Thyroid gland (tissue), 4 donors: ENCODE measurements at regions of chr7 and their contacts with region 1.

Region 1: DNA sequence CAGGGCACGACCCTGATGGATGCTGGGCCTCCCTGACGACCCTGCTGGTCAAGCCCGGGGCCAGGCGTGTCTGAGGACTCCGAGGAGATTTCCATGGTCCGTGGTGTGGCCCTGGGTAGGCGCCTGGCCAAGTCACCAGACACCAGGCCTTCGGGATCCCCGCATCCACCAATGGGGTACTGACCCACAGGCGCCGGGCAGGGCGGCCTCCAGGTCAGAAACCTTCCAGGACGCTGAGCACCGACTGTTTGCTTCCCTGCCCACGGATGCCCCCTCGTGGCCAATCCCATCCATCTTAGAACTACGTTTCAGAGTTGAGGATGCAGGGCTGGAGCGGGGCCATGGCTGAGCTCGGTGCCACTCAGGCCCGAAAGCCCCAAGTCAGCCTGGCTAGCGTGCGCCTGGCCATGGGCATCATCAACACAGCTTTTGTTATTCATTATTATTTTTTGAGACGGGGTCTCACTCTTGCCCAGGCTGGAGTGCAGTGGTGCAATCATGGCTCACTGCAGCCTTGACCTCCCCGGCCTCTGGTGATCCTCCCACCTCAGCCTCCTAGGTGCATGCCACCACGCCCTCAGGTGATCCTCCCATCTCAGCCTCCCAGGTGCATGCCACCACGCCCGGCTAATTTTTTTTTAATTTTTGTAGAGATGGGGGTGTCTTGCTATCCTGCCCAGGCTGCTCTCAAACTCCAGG is 7.1 kb upstream of the AMZ1 start:
- DNase-seq: peak; percentile 85 to 91
- H3K4me3 ChIP-seq: no peak overlapping the region
- H3K27ac ChIP-seq: no peak overlapping the region
- H3K4me1 ChIP-seq: peaks cover 0 to 3% of the 10 kb centered on the region in 2 donors
- H3K27me3 ChIP-seq: no peaks in the 10 kb centered on the region
- CTCF ChIP-seq: peak; percentile 46 to 77 (median 71)
- POLR2A ChIP-seq: no peak

Region 2: DNA sequence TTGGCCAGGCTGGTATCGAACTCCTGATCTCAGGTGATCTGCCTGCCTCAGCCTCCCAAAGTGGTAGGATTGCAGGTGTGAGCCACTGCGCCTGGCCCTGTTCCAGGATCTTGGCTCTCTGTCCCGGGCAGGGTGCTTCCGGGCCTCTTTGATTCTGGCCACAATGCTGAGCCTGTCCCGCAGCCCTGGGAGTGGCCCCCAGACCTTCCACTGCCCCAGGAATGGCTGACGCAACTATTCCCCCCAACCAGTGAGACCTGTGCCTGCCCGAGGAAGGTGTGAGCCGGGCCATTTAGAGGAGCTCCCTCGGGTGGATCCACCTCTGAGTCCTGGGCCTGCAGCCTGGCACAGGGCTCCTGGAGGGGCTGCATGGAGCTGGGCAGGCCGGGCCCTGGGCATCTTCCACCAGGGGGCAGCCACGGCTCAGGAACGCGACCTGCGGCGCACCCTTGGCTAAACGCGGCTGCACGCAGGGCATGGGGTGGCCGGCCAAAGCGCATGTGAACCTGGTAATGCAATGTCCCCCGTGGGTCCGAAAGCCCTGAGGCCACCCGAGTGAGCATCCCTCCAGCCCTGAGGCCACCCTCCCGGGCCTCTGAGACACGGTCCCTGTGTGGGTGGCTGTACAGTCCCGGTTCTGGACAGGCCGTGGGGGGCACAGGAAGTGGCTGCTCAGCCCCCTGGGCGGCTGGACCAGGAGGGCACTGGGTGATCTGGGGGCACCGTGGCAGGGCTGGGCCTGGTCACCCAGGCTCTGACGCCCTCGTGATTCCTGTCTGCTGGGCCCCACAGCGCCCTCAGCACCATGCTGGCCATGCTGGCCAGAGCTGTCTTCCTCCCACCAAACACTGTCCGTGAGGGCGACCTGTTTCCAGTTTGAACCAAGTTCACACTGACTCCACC is 229.5 kb before region 1 on chr7:
- intact Hi-C with region 1: loop called (anchors 5 kb)
- DNase-seq: peak; percentile 77 to 82
- H3K4me3 ChIP-seq: peak overlapping the region in 1 of 3 donors; percentile 26
- H3K27ac ChIP-seq: no peak overlapping the region
- H3K4me1 ChIP-seq: peaks cover 6 to 13% of the 10 kb centered on the region in 2 donors
- H3K27me3 ChIP-seq: no peaks in the 10 kb centered on the region
- CTCF ChIP-seq: peak; percentile 75 to 90 (median 77)
- POLR2A ChIP-seq: no peak

Region 3: GRCh38 chr7:2567679-2568278 is 113.2 kb before region 1 on chr7:
- intact Hi-C with region 1: loop called (anchors 10 kb)
- DNase-seq: no peak
- H3K4me3 ChIP-seq: no peak overlapping the region
- H3K27ac ChIP-seq: no peak overlapping the region
- H3K4me1 ChIP-seq: peaks cover 0 to 9% of the 10 kb centered on the region in 2 donors
- H3K27me3 ChIP-seq: no peaks in the 10 kb centered on the region
- CTCF ChIP-seq: peak in 2 of 6 experiments; percentile 32 to 35
- POLR2A ChIP-seq: no peak